Activated CD4-positive, alpha-beta T cell treated with anti-CD3 and anti-CD28 coated beads for 36 hours (primary cell): ENCODE measurements at regions of chr14 and their contacts with region 1.

Region 1: DNA sequence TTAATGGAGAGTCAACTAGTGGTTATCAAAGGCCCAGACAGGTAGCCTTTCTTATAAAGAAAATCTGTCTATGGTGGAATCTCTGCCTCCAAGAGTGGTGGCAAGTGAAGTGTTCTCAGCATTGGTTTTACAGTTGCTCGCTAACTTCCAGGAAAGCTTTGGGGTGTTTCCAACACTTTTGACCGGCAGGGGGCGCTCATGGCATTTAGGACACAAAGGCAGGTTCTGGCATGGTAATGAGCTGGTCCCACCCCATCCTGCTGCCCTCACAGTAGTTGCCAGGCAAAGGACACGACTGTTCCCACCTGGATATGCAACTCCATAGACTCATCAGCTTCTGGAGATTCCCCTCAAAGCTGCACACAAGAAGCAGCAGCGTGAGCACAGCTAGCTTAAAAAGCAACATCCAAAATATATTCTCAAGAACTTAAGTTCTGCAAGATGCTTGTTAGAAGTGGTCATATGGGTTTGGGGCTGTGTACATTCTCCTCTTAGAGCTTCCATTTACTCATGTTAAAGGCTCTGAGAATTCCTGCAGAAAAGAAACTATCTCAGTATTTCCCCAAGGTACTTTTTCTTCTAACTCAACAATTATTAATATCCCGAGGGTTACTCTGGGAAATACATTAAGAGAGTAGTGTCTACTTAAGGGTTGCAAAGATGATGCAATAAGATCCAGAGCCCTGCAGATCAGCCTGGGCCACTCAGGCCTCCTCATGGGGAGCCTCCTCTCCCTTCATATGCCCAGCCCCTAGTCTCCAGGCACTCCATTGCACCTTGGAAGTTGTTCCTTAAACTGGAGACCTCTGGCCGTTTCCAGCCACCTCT is 14.8 kb downstream of the PROX2 start:
- DNase-seq: peak; percentile 96
- ATAC-seq: peak; percentile 93
- H3K4me3 Mint-ChIP-seq: no peak overlapping the region
- H3K27ac Mint-ChIP-seq: no peak overlapping the region
- H3K4me1 Mint-ChIP-seq: peaks cover 7% of the 10 kb centered on the region
- H3K27me3 Mint-ChIP-seq: no peaks in the 10 kb centered on the region

Region 2: GRCh38 chr14:73771848-73772638 is 1089.1 kb before region 1 on chr14:
- CTCF ChIA-PET with region 1: no interaction called
- POLR2A ChIA-PET with region 1: no interaction called
- intact Hi-C with region 1: no loop called
- DNase-seq: peak; percentile 90
- ATAC-seq: peak; percentile 80
- H3K4me3 Mint-ChIP-seq: peak overlapping the region; percentile 12
- H3K27ac Mint-ChIP-seq: peak overlapping the region; percentile 89
- H3K4me1 Mint-ChIP-seq: peaks cover 73% of the 10 kb centered on the region
- H3K27me3 Mint-ChIP-seq: no peaks in the 10 kb centered on the region

Region 3: GRCh38 chr14:74737753-74738325 is 123.3 kb before region 1 on chr14:
- CTCF ChIA-PET with region 1: no interaction called
- POLR2A ChIA-PET with region 1: no interaction called
- intact Hi-C with region 1: no loop called
- DNase-seq: peak; percentile 30
- ATAC-seq: peak; percentile 57
- H3K4me3 Mint-ChIP-seq: no peak overlapping the region
- H3K27ac Mint-ChIP-seq: no peak overlapping the region
- H3K4me1 Mint-ChIP-seq: no peaks in the 10 kb centered on the region
- H3K27me3 Mint-ChIP-seq: no peaks in the 10 kb centered on the region

Region 4: GRCh38 chr14:74754157-74754556 is 107.0 kb before region 1 on chr14:
- CTCF ChIA-PET with region 1: no interaction called
- POLR2A ChIA-PET with region 1: no interaction called
- intact Hi-C with region 1: no loop called
- DNase-seq: no peak
- ATAC-seq: no peak
- H3K4me3 Mint-ChIP-seq: no peak overlapping the region
- H3K27ac Mint-ChIP-seq: no peak overlapping the region
- H3K4me1 Mint-ChIP-seq: no peaks in the 10 kb centered on the region
- H3K27me3 Mint-ChIP-seq: no peaks in the 10 kb centered on the region

Region 5: DNA sequence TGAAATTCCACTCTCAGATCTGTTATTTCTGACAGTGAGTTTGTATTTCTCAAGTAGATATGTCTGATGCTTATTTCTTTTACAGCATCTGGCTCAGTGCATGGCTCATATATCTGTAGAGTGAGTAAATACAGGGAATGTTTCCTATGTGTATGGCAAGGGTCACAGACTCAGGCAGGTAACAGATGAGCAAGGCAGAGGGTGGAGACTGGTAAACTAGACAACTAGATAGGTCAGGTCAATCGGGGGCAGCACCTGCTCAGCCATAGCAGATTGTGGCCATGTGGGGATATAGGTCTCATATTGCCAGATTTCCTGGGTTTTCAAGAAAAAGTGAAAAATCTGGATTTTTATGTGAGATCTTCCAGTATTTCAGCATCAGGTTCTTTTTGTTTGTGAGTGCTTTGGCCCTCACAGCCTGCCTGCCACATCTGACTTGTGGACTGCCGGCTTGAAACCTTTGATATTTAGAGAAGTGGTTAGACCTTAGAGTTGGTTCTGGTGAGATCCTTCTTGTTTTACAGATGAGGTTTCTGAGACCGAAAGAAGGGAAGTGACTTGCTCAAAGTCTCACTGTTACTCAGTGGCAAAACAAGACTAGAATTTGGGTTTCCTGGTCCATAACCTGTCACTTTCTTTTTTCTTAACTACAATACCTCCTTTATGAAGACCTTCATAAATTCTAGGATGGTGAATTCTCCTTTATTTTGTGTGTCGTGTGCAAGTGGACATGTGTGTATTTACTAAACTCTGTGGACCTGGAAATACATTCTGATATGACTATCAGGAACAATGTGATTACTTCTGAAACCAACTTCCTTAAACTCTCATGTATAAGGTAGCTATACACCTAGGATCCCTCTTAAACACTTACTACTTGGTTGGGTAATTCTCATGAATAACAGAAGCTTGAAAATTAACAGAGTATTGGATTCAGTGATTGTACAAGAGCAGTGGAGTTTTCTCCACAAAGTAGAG is 19.6 kb before region 1 on chr14:
- CTCF ChIA-PET with region 1: interaction called, 80 read pairs
- POLR2A ChIA-PET with region 1: interaction called, 3 read pairs
- intact Hi-C with region 1: no loop called
- DNase-seq: peak; percentile 49
- ATAC-seq: peak; percentile 81
- H3K4me3 Mint-ChIP-seq: peak overlapping the region; percentile 24
- H3K27ac Mint-ChIP-seq: peak overlapping the region; percentile 80
- H3K4me1 Mint-ChIP-seq: peaks cover 59% of the 10 kb centered on the region
- H3K27me3 Mint-ChIP-seq: no peaks in the 10 kb centered on the region

Region 6: DNA sequence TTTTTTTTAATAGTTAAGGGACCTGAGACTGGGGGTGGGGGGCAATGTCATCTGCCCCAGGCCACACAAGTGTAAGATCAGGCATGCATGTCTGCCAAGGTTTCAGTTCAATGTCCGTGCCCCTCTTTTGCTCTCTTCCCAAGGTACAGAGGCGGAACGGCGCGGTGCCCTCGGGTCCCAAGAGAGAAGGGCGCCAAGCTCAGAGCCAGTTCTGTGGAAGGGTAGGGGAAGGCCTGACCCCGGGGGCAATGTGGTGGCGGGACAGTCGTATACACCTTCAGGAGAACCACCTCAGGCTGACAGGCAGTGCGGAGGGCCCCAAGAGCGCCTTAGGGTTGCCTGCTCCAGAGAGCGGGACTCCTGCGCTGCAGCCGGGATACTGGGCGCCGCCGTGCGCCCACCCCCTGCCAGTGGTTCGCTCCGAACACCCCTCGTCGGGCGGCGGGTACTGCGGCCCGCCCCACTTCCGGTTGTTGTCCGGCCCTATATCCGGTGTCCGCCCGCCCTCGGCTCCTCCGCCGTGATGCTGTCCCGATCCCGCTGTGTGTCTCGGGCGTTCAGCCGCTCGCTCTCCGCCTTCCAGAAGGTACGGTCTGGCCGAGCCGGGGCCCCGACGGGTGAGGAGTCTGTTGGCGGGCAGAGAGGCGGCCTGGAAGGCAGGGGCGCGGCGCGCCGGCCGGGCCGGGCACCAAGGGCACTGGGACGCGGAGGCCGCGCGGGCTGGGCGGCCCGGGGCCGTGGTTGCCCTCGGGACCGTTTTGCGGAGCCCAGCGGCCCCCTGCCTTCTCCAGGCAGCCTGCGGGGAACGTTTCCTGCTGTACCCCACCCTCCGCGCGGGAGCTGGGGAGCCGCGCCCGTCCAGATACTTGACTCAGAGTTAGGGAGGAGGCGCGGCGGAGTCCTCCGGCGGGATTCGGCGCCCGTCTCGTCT is 20.6 kb after region 1 on chr14 and contains the start of gene DLST:
- CTCF ChIA-PET with region 1: interaction called, 88 read pairs
- POLR2A ChIA-PET with region 1: interaction called, 4 read pairs
- intact Hi-C with region 1: loop called in 1 of 2 experiments (anchors 2 kb)
- DNase-seq: peak; percentile 92
- ATAC-seq: peak; percentile 89
- H3K4me3 Mint-ChIP-seq: peak within 1 kb of the TSS; percentile 99
- H3K27ac Mint-ChIP-seq: peak within 1 kb of the TSS; percentile 96
- H3K4me1 Mint-ChIP-seq: peaks cover 64% of the 10 kb centered on the region
- H3K27me3 Mint-ChIP-seq: no peaks in the 10 kb centered on the region
- total RNA-seq, gene DLST: 103 to 120 TPM

Region 7: GRCh38 chr14:74905375-74906142 is 44.4 kb after region 1 on chr14:
- CTCF ChIA-PET with region 1: interaction called, 250 read pairs
- POLR2A ChIA-PET with region 1: interaction called, 3 read pairs
- intact Hi-C with region 1: loop called (anchors 1 kb)
- DNase-seq: peak; percentile 88
- ATAC-seq: peak; percentile 79
- H3K4me3 Mint-ChIP-seq: no peak overlapping the region
- H3K27ac Mint-ChIP-seq: peak overlapping the region; percentile 63
- H3K4me1 Mint-ChIP-seq: no peaks in the 10 kb centered on the region
- H3K27me3 Mint-ChIP-seq: no peaks in the 10 kb centered on the region

Region 8: GRCh38 chr14:74945823-74946682 is 84.9 kb after region 1 on chr14:
- CTCF ChIA-PET with region 1: interaction called, 26 read pairs
- POLR2A ChIA-PET with region 1: no interaction called
- intact Hi-C with region 1: loop called in 1 of 2 experiments (anchors 1 kb)
- DNase-seq: peak; percentile 87
- ATAC-seq: peak; percentile 69
- H3K4me3 Mint-ChIP-seq: no peak overlapping the region
- H3K27ac Mint-ChIP-seq: no peak overlapping the region
- H3K4me1 Mint-ChIP-seq: peaks cover 28% of the 10 kb centered on the region
- H3K27me3 Mint-ChIP-seq: no peaks in the 10 kb centered on the region